Upper lobe of right lung (tissue), 1 donor: ENCODE measurements at regions of chr13 and their contacts with region 1.

Region 1: DNA sequence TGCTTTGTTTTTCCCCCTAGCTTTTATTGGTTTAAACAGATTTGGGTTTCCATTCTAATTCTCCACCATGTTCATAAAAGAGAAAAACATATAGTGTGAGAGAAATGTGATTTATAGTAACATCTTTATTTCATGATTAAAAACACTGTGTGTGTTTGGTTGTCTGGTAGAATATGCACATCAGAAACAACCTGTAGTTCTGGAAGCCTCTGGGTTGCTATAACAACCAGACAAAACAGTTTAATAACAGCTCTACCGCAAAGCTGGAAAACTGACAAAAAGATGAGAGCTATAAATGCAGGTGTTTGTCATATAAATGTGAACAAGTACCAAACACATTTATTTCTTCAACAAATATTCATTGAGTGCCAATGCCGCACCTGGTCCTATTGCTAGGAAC is 9.8 kb downstream of the KBTBD6 start:
- DNase-seq: no peak
- ATAC-seq: no peak
- H3K4me3 ChIP-seq: no peak overlapping the region
- H3K27ac ChIP-seq: no peak overlapping the region
- H3K4me1 ChIP-seq: no peaks in the 10 kb centered on the region
- H3K27me3 ChIP-seq: no peaks in the 10 kb centered on the region
- CTCF ChIP-seq: no peak

Region 2: DNA sequence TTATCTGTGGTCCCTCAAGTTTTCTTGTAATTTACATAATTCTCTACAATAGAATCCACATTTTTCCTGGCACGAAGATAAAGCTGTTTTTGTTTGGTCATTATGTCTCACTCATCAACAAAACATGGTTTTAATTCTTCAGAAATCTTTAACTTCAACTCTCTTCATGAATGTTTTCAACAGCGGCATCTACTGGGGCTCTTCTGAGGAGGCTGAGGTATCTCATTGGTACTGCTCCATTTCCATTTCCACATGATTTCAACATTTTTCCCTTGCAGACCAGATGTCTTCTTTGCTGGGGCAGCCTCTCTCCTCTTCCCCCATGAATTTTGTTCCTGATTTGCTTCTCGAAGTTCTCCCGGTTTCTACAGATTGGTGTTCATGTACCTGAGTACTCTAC is 77.3 kb after region 1 on chr13:
- intact Hi-C with region 1: loop called (anchors 10 kb)
- DNase-seq: no peak
- ATAC-seq: no peak
- H3K4me3 ChIP-seq: no peak overlapping the region
- H3K27ac ChIP-seq: no peak overlapping the region
- H3K4me1 ChIP-seq: no peaks in the 10 kb centered on the region
- H3K27me3 ChIP-seq: no peaks in the 10 kb centered on the region
- CTCF ChIP-seq: no peak

Region 3: DNA sequence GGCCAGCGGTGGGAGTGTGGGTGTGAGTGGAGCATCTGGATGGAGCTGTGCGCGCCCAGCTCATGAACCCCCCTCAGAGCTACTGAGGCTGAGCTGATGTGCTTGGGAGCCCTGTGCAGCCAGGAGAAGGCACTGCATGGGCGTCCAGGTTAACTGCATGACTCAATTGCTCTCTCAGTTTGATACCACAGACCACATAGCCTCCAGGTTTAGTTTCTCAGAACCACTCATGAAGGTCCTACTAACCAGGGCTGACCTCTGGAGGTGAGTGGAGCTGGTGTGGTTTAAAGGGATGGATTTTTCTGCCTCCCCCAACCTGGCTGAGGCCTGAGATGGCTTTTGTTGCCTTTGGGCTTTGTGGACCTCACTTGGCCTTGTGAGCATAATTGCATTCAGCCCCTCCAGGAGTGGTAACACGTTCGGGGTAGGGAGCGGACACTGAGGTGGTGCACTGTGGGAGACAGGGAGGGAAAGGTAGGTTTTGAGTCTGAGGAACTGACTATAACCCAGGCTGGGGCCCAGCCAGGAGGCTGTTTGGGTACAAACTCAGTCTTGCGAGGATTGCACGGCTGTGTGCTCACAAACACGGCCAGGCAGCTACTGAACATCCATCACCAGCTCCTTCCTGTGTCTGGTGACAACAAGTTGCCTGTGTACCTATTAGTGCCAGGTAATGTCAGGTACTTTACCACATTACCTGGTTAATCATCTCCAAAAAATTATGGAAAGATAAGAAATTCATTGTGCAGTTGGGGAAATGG is 432.0 kb after region 1 on chr13:
- intact Hi-C with region 1: no loop called
- DNase-seq: no peak
- ATAC-seq: peak; percentile 12
- H3K4me3 ChIP-seq: no peak overlapping the region
- H3K27ac ChIP-seq: no peak overlapping the region
- H3K4me1 ChIP-seq: no peaks in the 10 kb centered on the region
- H3K27me3 ChIP-seq: no peaks in the 10 kb centered on the region
- CTCF ChIP-seq: no peak